Heart right ventricle (tissue), 16 donors: ENCODE measurements at regions of chr3 and their contacts with region 1.

Region 1: DNA sequence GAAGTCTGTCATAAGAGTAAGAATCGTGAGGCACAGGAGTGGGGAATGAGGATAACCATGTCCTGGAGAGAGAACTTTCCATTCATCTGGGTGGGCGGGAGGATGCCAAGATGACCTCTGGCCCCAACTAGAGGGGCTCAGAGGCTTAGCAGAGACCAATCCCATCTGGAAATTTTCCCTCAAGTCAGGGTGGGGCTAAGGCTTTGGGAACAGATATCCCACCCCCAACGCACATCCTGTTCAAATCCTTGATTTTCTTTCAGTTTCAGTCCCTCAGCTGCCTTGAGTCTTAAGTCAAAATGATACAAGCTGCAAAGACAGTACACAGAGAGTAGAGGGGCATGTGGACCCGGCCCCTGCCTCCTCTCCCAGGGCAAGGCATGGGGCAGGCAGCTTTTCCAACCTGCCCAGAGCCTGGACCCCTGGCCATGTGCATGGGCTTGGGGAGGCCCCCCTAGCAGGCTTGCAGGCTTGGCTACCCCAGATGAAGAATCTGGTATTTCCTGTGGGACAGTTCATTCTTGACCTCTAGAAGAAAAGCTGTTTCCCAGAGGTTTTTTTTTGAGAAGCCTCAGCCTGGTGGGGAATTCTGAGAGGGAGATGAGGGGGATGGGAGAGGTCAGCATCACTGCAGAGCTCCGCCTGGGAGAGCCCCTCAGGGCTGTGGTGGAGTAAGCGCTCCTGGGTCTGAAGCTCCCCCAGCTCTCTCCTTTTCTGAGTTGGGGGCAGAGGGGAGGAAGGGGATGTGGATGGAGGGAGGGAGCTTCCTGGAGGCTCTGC is 109.7 kb upstream of the HACD2 start:
- DNase-seq: peak in 1 of 2 donors; percentile 32
- ATAC-seq: peak; percentile 18 to 71 (median 52)
- H3K4me3 ChIP-seq: peak overlapping the region in 3 of 10 donors; percentile 8 to 34 (median 10)
- H3K27ac ChIP-seq: peak overlapping the region in 9 of 10 donors; percentile 43 to 85 (median 74)
- H3K4me1 ChIP-seq: peaks cover 13 to 73% (median 49%) of the 10 kb centered on the region in 9 donors
- H3K27me3 ChIP-seq: no peaks in the 10 kb centered on the region
- CTCF ChIP-seq: no peak

Region 2: DNA sequence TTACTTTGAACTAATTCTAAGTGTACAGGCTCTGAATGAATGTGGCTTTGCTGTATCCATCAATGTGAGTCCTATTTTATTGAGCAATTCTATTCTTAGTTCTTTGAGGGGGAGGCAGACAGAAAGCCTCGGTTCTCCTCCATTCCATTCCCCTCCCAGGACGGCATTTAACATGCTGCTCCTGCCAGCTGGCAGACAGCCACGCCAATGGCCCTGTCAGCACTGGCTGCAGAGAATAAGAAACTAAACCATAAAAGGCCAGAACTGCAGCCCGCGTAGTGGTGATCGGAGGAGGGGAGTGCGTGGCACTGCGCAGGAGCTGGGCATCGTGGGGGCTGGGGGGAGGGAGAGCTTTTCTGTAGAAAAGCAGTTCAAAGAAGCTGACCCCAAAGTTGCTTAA is 33.7 kb before region 1 on chr3:
- intact Hi-C with region 1: loop called in 2 of 10 experiments (anchors 2 to 5 kb)
- DNase-seq: peak; percentile 91 to 92
- ATAC-seq: peak; percentile 87 to 96 (median 92)
- H3K4me3 ChIP-seq: peak overlapping the region in 1 of 10 donors; percentile 9
- H3K27ac ChIP-seq: peak overlapping the region in 9 of 10 donors; percentile 39 to 77 (median 70)
- H3K4me1 ChIP-seq: peaks cover 29 to 68% (median 52%) of the 10 kb centered on the region in 9 donors
- H3K27me3 ChIP-seq: no peaks in the 10 kb centered on the region
- CTCF ChIP-seq: no peak

Region 3: GRCh38 chr3:123723522-123724168 is 29.1 kb after region 1 on chr3:
- intact Hi-C with region 1: loop called in 1 of 10 experiments (anchors 2 kb)
- DNase-seq: peak in 1 of 2 donors; percentile 63
- ATAC-seq: peak in 6 of 8 donors; percentile 21 to 49 (median 46)
- H3K4me3 ChIP-seq: no peak overlapping the region
- H3K27ac ChIP-seq: no peak overlapping the region
- H3K4me1 ChIP-seq: peaks cover 3 to 33% (median 23%) of the 10 kb centered on the region in 9 donors
- H3K27me3 ChIP-seq: no peaks in the 10 kb centered on the region
- CTCF ChIP-seq: peak; percentile 76 to 86 (median 81)